ENCODE measurements at regions of chr22 and their contacts with region 1.

Region 1: GRCh38 chr22:41285820-41286638 is at the start of gene RANGAP1:
- DNase-seq: peak; percentile 99
- H3K4me3 Mint-ChIP-seq: peak within 1 kb of the TSS; percentile 98
- H3K27ac Mint-ChIP-seq: peak within 1 kb of the TSS; percentile 100
- H3K4me1 Mint-ChIP-seq: peaks cover 37% of the 10 kb centered on the region
- H3K27me3 Mint-ChIP-seq: no peaks in the 10 kb centered on the region
- total RNA-seq, gene RANGAP1: 173 to 174 TPM

Region 2: GRCh38 chr22:40533712-40534378 is 752.2 kb before region 1 on chr22:
- CTCF ChIA-PET with region 1: no interaction called
- intact Hi-C with region 1: loop called (anchors 5 kb)
- DNase-seq: peak; percentile 78
- H3K4me3 Mint-ChIP-seq: peak overlapping the region; percentile 68
- H3K27ac Mint-ChIP-seq: peak overlapping the region; percentile 87
- H3K4me1 Mint-ChIP-seq: peaks cover 60% of the 10 kb centered on the region
- H3K27me3 Mint-ChIP-seq: no peaks in the 10 kb centered on the region

Region 3: DNA sequence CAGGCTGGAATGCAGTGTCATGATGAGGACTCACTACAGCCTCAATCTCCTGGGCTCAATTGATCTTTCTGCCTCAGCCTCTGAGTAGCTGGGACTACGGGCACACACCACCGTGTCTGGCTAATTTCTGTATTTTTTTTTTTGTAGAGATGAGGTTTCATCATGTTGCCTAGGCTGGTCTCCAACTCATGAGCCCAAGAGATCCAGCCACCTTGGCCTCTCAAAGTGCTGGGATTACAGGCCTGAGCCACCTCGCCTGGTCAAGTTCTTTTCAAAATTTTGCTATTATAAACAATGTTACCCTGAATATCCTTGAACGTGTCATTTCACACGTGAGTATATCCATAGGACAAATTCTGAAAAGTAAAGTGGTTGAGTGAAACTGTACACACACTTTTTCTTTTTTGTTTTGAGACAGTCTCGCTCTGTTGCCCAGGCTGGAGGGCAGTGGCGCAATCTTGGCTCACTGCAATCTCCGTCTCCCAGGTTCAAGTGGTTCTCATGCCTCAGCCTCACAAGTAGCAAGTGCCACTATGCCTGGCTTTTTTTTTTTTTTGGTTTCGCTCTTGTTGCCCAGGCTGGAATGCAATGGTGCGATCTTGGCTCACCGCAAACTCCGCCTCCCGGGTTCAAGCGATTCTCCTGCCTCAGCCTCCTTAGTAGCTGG is 215.2 kb before region 1 on chr22:
- CTCF ChIA-PET with region 1: no interaction called
- intact Hi-C with region 1: loop called (anchors 2 kb)
- DNase-seq: no peak
- H3K4me3 Mint-ChIP-seq: no peak overlapping the region
- H3K27ac Mint-ChIP-seq: no peak overlapping the region
- H3K4me1 Mint-ChIP-seq: peaks cover 10% of the 10 kb centered on the region
- H3K27me3 Mint-ChIP-seq: no peaks in the 10 kb centered on the region

Region 4: GRCh38 chr22:41217553-41218157 is 68.4 kb before region 1 on chr22:
- CTCF ChIA-PET with region 1: no interaction called
- intact Hi-C with region 1: loop called (anchors 1 kb)
- DNase-seq: peak; percentile 84
- H3K4me3 Mint-ChIP-seq: peak overlapping the region; percentile 63
- H3K27ac Mint-ChIP-seq: peak overlapping the region; percentile 90
- H3K4me1 Mint-ChIP-seq: peaks cover 28% of the 10 kb centered on the region
- H3K27me3 Mint-ChIP-seq: no peaks in the 10 kb centered on the region

Region 5: DNA sequence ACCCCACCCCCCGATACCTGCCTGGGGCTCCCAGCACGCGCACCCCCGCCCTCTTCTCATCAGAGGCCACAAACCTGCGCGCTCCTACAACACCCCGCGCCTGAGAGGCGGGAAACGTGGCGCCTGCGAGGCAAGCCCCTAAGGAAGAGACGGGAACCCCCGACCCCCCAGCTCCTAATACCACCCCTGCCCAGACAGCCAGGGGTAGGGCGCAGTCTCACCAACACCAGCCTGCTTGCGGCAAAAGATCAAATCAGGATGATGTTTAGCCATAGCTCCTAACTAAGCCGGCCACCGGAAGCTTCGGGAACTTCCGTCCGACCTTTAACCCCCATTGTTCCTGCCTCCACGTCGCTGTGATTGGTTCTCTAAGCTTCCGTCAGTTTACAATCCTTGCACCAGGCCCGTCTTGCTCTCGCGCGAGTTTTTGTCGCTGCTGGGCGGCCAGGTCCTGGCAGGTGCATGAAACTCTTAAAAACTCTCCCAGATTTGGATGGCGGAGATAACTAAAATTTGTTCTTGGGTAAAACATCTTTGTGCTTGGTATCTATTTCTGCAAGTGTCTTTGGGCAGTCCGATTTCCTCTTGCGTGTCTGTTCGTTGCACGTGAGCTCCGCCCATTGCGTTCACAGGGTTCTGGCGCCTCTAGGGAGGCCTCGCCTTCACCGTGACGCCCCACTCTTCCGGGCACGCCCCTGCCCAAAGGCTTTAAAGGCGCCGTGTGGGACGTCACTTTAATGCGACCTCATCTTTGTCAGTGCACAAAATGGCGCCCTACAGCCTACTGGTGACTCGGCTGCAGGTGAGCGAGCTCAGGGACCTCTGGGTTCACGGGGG is 182.6 kb after region 1 on chr22 and contains the starts of genes ACO2 and PHF5A:
- CTCF ChIA-PET with region 1: no interaction called
- intact Hi-C with region 1: loop called (anchors 1 kb)
- DNase-seq: peak; percentile 99
- H3K4me3 Mint-ChIP-seq: peak within 1 kb of the TSS; percentile 75
- H3K27ac Mint-ChIP-seq: peak within 1 kb of the TSS; percentile 96
- H3K4me1 Mint-ChIP-seq: peaks cover 62% of the 10 kb centered on the region
- H3K27me3 Mint-ChIP-seq: no peaks in the 10 kb centered on the region
- total RNA-seq, gene ACO2: 113 to 118 TPM
- total RNA-seq, gene PHF5A: 67.5 to 69.0 TPM

Region 6: DNA sequence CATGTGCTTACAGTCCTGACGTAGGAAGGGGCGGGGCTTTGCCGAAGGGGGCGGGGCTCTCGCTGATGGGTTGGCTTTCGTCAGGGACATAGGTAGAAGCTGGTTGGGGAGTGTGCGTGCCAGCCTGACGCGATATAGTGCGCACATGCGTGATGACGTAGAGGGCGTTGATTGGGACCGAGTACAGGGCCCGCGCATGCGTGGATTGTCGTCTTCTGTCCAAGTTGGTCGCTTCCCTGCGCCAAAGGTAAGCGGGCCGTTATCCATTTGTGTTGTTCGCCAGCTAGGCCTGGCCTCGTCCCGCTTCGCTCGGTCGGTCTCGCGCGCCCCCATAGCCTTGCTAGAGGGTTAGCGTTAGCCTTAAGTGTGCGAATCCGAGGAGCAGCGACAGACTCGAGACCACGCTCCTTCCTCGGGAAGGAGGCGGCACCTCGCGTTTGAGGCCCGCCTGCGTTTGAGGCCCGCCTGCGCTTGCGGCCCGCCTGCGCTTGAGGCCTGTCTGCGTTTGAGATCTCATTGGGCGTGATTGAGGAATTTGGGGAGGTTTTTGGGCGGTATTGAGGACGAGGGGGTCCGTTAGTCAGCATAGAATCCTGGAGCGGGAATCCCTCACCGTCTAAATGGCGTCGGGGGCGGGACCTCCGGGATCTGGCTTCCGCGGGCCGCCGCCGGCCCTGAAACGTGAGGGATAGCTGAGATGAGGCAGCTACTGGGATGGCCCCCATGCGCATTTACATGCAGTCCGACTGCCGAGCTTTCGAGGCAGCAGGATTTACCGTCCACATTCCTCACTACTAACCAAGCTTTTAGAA is 335.3 kb after region 1 on chr22 and contains the start of gene XRCC6:
- CTCF ChIA-PET with region 1: no interaction called
- intact Hi-C with region 1: loop called (anchors 1 kb)
- DNase-seq: peak; percentile 100
- H3K4me3 Mint-ChIP-seq: peak within 1 kb of the TSS; percentile 98
- H3K27ac Mint-ChIP-seq: peak within 1 kb of the TSS; percentile 98
- H3K4me1 Mint-ChIP-seq: peaks cover 56% of the 10 kb centered on the region
- H3K27me3 Mint-ChIP-seq: no peaks in the 10 kb centered on the region
- total RNA-seq, gene XRCC6: 424 to 436 TPM